ENCODE measurements at regions of chr1 and their contacts with region 1.

Region 1: GRCh38 chr1:153220606-153221303 is 3.4 kb downstream of the PRR9 start:
- DNase-seq: no peak
- H3K4me3 Mint-ChIP-seq: no peak overlapping the region
- H3K27ac Mint-ChIP-seq: no peak overlapping the region
- H3K4me1 Mint-ChIP-seq: peaks cover 7% of the 10 kb centered on the region
- H3K27me3 Mint-ChIP-seq: peaks cover 23% of the 10 kb centered on the region
- CTCF ChIP-seq: no peak

Region 2: DNA sequence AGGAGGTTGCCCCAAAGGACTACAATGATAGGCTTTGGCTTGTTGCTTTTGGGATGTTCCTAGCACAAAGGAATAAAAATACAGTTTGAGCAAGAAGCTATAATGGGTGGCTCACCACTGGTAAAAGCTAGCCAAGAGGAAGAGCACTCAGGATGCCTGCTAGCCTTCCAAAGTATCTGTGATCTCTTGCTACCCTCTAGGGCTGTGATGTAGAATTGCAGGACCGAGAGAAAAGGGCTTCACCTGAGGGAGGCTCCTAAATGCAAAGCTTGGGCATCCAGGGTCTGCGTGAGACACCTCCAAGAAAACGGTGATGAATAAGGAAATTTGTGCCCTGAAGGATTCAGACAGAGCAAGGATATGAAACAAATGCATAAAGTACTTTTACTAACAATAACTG is 294.7 kb before region 1 on chr1:
- CTCF ChIA-PET with region 1: interaction called, 6 read pairs
- POLR2A ChIA-PET with region 1: no interaction called
- intact Hi-C with region 1: loop called (anchors 5 kb)
- DNase-seq: peak; percentile 82
- H3K4me3 Mint-ChIP-seq: no peak overlapping the region
- H3K27ac Mint-ChIP-seq: no peak overlapping the region
- H3K4me1 Mint-ChIP-seq: peaks cover 11% of the 10 kb centered on the region
- H3K27me3 Mint-ChIP-seq: no peaks in the 10 kb centered on the region
- CTCF ChIP-seq: peak; percentile 98

Region 3: GRCh38 chr1:153087652-153088051 is 133.1 kb before region 1 on chr1:
- CTCF ChIA-PET with region 1: no interaction called
- POLR2A ChIA-PET with region 1: no interaction called
- intact Hi-C with region 1: no loop called
- DNase-seq: no peak
- H3K4me3 Mint-ChIP-seq: no peak overlapping the region
- H3K27ac Mint-ChIP-seq: no peak overlapping the region
- H3K4me1 Mint-ChIP-seq: peaks cover 6% of the 10 kb centered on the region
- H3K27me3 Mint-ChIP-seq: no peaks in the 10 kb centered on the region
- CTCF ChIP-seq: no peak

Region 4: DNA sequence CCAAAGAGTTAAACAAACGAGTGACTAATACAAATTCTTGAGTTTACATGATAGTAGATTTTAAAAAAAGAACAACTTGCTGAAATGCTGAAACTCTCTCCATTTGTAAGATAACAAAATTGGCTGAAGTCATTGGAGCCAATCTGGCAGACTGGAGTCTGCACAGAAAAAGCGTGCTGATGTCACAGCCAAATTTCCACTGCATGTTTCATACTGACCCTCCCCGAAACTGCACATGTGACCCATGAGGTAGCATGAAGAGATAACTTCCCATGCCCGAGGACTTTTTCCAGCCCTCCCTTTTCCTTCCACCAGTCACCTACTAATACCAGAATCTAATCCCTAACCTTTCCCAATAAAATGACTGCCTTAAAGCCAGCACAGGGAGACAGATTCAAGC is 18.7 kb before region 1 on chr1:
- CTCF ChIA-PET with region 1: interaction called, 185 read pairs
- POLR2A ChIA-PET with region 1: no interaction called
- intact Hi-C with region 1: no loop called
- DNase-seq: no peak
- H3K4me3 Mint-ChIP-seq: no peak overlapping the region
- H3K27ac Mint-ChIP-seq: no peak overlapping the region
- H3K4me1 Mint-ChIP-seq: no peaks in the 10 kb centered on the region
- H3K27me3 Mint-ChIP-seq: peaks cover 34% of the 10 kb centered on the region
- CTCF ChIP-seq: no peak

Region 5: GRCh38 chr1:153210206-153210605 is 10.5 kb before region 1 on chr1:
- CTCF ChIA-PET with region 1: interaction called, 29 read pairs
- POLR2A ChIA-PET with region 1: no interaction called
- intact Hi-C with region 1: no loop called
- DNase-seq: no peak
- H3K4me3 Mint-ChIP-seq: no peak overlapping the region
- H3K27ac Mint-ChIP-seq: no peak overlapping the region
- H3K4me1 Mint-ChIP-seq: no peaks in the 10 kb centered on the region
- H3K27me3 Mint-ChIP-seq: peaks cover 22% of the 10 kb centered on the region
- CTCF ChIP-seq: no peak

Region 6: DNA sequence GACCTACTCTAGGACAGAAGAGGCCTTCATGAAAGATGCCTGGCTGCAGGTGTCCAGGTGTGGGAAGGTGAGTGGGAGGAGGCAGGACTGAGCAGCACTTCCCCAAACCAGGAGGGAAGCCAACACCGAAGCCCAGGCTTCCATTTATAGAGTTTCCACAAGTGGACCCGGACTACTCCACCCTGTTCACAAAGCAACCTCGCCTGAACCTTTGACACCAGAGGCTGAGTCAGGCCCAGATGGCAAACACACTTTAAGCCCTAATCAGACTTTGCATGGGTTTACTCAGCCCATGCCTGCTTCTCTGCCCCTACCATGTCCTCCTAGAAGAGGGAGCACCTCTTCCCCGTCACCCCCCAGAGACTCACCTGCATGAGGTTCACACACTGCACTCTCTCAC is 10.6 kb after region 1 on chr1:
- CTCF ChIA-PET with region 1: interaction called, 47 read pairs
- POLR2A ChIA-PET with region 1: interaction called, 3 read pairs
- intact Hi-C with region 1: no loop called
- DNase-seq: no peak
- H3K4me3 Mint-ChIP-seq: no peak overlapping the region
- H3K27ac Mint-ChIP-seq: no peak overlapping the region
- H3K4me1 Mint-ChIP-seq: peaks cover 8% of the 10 kb centered on the region
- H3K27me3 Mint-ChIP-seq: peaks cover 14% of the 10 kb centered on the region
- CTCF ChIP-seq: no peak

Region 7: GRCh38 chr1:153238536-153238935 is 17.8 kb after region 1 on chr1:
- CTCF ChIA-PET with region 1: interaction called, 47 read pairs
- POLR2A ChIA-PET with region 1: no interaction called
- intact Hi-C with region 1: no loop called
- DNase-seq: peak; percentile 47
- H3K4me3 Mint-ChIP-seq: no peak overlapping the region
- H3K27ac Mint-ChIP-seq: no peak overlapping the region
- H3K4me1 Mint-ChIP-seq: no peaks in the 10 kb centered on the region
- H3K27me3 Mint-ChIP-seq: peaks cover 62% of the 10 kb centered on the region
- CTCF ChIP-seq: peak; percentile 25

Region 8: DNA sequence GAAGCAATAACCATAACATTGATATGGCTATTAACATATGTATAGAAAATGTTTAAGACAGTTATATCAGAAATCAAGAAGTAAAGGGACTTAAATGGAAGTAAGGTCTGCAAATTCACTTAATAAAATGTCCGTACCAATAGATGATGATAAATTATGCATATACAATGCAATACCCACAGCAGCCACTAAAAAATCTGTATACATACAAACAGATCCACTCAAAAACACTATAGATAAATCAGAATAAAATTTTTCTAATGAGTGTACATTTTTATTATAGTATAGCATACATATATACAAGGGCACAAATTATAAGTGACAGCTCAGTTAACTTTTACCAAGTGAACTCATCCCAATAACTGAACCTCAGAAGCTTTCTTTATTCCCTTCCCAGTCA is 44.7 kb after region 1 on chr1:
- CTCF ChIA-PET with region 1: no interaction called
- POLR2A ChIA-PET with region 1: no interaction called
- intact Hi-C with region 1: no loop called
- DNase-seq: no peak
- H3K4me3 Mint-ChIP-seq: no peak overlapping the region
- H3K27ac Mint-ChIP-seq: no peak overlapping the region
- H3K4me1 Mint-ChIP-seq: peaks cover 5% of the 10 kb centered on the region
- H3K27me3 Mint-ChIP-seq: peaks cover 96% of the 10 kb centered on the region
- CTCF ChIP-seq: peak; percentile 17